SK-N-SH (cell line): ENCODE measurements at regions of chr10 and their contacts with region 1.

Region 1: DNA sequence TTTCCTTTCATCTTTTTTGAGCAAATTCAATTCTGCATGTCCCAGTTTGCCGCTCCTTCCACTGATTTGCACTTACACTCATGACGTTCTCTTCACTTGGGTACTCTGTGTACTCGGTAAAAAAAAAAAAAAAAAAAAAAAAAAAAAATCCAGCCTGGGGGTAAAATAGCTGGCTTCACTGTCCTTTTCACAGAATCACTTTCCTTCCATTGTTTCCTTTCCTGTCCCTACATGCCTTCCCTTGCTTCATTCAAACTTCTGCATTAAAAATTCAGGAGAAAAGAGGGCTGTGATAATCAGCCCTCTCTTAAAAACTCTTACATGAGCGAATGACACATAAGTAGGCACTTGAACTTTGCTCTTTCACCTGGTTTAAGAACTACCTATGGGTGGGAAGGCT is 8.7 kb downstream of the ANKRD1 start:
- DNase-seq: no peak
- H3K4me3 ChIP-seq: no peak overlapping the region
- H3K27ac ChIP-seq: peak overlapping the region; percentile 30 to 67; a peak in 2 of 4 replicates
- H3K4me1 ChIP-seq: peaks cover 4 to 7% of the 10 kb centered on the region in 2 experiments; a peak in 2 of 4 replicates
- H3K27me3 ChIP-seq: no peaks in the 10 kb centered on the region
- CTCF ChIP-seq: no peak
- EP300 ChIP-seq: no peak
- RAD21 ChIP-seq: no peak

Region 2: DNA sequence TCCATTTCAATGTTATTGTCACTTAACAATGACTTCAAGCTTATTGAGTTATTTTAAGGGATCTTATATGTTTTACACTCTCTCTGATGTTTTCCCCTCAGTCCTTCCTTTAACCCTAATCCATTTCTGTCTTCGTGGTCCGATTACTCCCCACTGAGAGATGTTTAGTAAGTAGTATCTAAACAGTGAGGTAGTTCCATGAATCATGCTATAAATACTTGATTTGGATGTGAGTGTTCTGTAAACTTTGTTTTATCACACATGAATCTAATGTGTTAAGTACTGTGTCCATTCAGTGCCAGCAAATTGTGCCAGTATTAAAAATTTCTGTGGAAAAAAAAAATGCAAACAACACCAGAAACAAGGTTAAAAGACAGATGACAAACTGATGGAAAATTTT is 21.8 kb before region 1 on chr10:
- CTCF ChIA-PET with region 1: interaction called, 10 read pairs
- POLR2A ChIA-PET with region 1: no interaction called
- DNase-seq: no peak
- H3K4me3 ChIP-seq: no peak overlapping the region
- H3K27ac ChIP-seq: no peak overlapping the region
- H3K4me1 ChIP-seq: peaks cover 0 to 4% of the 10 kb centered on the region in 2 experiments; a peak in 1 of 4 replicates
- H3K27me3 ChIP-seq: no peaks in the 10 kb centered on the region
- CTCF ChIP-seq: no peak
- EP300 ChIP-seq: no peak
- RAD21 ChIP-seq: no peak

Region 3: GRCh38 chr10:90968328-90969086 is 56.3 kb after region 1 on chr10:
- CTCF ChIA-PET with region 1: interaction called, 15 read pairs
- POLR2A ChIA-PET with region 1: no interaction called
- DNase-seq: peak; percentile 38
- H3K4me3 ChIP-seq: no peak overlapping the region
- H3K27ac ChIP-seq: peak overlapping the region; percentile 77 to 86; a peak in 3 of 4 replicates
- H3K4me1 ChIP-seq: peaks cover 21 to 29% of the 10 kb centered on the region in 2 experiments; a peak in 3 of 4 replicates
- H3K27me3 ChIP-seq: no peaks in the 10 kb centered on the region
- CTCF ChIP-seq: no peak
- EP300 ChIP-seq: peak; percentile 73 to 98
- RAD21 ChIP-seq: no peak; the same call in 1 of the 2 replicates

Region 4: DNA sequence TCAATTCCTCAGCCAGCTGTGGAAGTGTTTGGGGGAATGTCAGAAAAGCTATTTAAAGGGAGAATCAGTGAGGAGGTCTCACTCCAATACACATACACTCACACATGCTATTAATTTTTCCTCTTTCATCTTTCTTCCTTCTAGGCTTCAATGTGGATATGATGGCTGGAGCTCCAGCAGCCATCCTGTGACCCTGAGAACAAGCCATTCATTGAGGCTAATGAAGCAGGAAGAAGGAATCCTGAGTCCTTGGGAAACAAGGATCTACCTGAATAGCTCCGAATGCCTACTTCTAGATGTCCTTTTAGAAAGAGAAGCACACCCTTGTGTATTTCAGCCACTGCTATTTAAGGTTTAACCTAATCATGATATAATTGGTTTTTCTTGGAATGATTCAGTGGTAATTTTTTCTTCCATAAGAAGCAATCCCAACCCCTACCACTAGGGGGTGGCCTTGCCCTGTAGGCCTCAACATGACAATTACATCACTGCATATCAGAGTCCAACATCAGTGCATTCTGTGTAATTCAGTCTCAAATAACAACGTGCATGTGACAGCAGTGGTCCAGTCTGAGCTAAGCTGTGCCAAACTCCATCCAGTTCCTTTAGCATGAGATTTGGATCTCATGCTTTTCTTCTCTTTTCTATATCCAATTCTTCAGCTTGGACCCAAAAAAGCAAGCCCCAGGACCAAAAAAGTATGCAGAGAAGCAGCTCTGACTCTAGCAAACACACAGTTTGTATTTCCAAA is 94.0 kb after region 1 on chr10:
- CTCF ChIA-PET with region 1: interaction called, 30 read pairs
- POLR2A ChIA-PET with region 1: no interaction called
- DNase-seq: peak; percentile 28
- H3K4me3 ChIP-seq: no peak overlapping the region; a peak in 1 of 4 replicates
- H3K27ac ChIP-seq: peak overlapping the region; percentile 19 to 55; a peak in 2 of 4 replicates
- H3K4me1 ChIP-seq: no peaks in the 10 kb centered on the region; a peak in 2 of 4 replicates
- H3K27me3 ChIP-seq: no peaks in the 10 kb centered on the region
- CTCF ChIP-seq: peak; percentile 95
- EP300 ChIP-seq: no peak
- RAD21 ChIP-seq: peak; percentile 88

Region 5: DNA sequence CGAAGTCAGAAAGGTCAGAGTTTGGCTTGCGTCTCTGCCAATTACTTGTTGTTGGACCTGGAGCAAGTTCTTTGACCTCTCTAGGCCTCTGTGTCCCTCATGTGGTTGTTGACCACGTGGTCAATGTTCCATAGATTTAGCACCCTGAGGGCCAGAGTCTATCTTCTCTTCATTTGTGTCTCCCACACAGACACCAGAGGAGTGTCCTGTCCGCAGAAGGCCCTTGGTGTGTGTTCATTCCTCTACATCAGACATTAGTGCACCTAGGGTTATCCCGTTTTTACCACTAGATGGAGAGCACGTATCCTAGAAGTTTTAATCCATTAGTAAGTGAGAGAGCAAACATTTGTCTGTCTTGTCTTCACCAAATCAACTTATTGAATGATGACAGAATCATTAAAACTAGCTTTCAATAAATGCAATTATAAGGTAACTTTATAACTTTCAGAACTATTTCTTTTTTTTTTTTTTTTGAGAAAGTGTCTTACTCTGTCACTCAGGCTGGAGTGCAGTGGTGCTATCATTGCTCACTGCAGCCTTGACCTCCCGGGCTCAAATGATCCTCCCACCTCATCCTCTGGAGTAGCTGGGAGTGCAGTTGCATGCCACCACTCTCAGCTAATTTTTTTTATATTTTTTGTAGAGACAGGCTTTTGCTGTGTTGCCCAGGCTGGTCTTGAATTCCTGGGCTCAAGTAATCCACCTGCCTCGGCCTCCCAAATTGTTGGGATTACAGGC is 131.2 kb after region 1 on chr10:
- CTCF ChIA-PET with region 1: interaction called, 20 read pairs
- POLR2A ChIA-PET with region 1: no interaction called
- DNase-seq: peak; percentile 52
- H3K4me3 ChIP-seq: no peak overlapping the region; a peak in 1 of 4 replicates
- H3K27ac ChIP-seq: no peak overlapping the region
- H3K4me1 ChIP-seq: no peaks in the 10 kb centered on the region
- H3K27me3 ChIP-seq: no peaks in the 10 kb centered on the region
- CTCF ChIP-seq: peak; percentile 62
- EP300 ChIP-seq: no peak
- RAD21 ChIP-seq: peak; percentile 88

Region 6: DNA sequence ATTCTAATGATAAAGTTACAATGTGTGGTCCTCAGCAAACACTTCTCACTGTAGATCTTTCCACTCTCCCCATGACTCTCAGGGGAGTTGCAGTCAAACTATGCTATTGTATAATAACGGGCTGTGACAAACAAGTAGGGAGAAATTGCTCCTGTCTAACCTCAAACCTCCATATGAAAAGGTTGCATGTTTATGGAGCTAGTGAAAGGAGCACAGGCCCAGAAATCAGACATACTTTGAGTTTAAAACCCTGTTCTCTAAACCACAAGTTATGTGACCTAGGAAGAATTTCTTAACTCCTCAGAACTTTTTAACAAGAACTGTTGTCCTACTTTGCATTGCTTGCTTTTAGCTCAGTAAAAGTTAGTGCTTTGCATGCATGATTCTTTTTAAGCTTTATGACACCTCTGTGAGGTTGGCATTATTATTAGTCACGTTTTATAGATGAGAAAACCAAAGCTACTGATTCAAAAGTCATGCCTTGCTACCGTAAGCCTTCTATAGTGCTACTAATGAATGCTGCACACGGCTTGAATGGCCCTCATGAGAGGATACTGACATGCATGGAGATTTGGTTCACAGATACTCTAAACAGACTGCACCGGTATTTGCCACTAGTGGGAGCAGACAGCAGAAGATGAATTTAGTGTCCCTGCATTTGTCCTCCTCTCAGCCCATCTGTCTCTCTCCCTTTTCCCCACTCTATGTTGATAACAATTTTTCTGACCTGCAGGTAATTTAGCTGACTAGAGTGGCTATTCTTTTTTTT is 178.8 kb after region 1 on chr10:
- CTCF ChIA-PET with region 1: interaction called, 11 read pairs
- POLR2A ChIA-PET with region 1: no interaction called
- DNase-seq: peak; percentile 33
- H3K4me3 ChIP-seq: no peak overlapping the region
- H3K27ac ChIP-seq: no peak overlapping the region
- H3K4me1 ChIP-seq: no peaks in the 10 kb centered on the region
- H3K27me3 ChIP-seq: no peaks in the 10 kb centered on the region
- CTCF ChIP-seq: peak; percentile 19; the same call in 1 of the 2 replicates
- EP300 ChIP-seq: no peak
- RAD21 ChIP-seq: peak; percentile 54

Region 7: GRCh38 chr10:91257310-91257709 is 345.1 kb after region 1 on chr10:
- CTCF ChIA-PET with region 1: interaction called, 124 read pairs
- POLR2A ChIA-PET with region 1: no interaction called
- DNase-seq: peak; percentile 22
- H3K4me3 ChIP-seq: no peak overlapping the region
- H3K27ac ChIP-seq: no peak overlapping the region
- H3K4me1 ChIP-seq: no peaks in the 10 kb centered on the region; a peak in 1 of 4 replicates
- H3K27me3 ChIP-seq: no peaks in the 10 kb centered on the region
- CTCF ChIP-seq: no peak
- EP300 ChIP-seq: peak in 1 of 2 experiments; percentile 90; a peak in 2 of 4 replicates
- RAD21 ChIP-seq: no peak; the same call in 1 of the 2 replicates